H1 (cell line): ENCODE measurements at regions of chr11 and their contacts with region 1.

Region 1: DNA sequence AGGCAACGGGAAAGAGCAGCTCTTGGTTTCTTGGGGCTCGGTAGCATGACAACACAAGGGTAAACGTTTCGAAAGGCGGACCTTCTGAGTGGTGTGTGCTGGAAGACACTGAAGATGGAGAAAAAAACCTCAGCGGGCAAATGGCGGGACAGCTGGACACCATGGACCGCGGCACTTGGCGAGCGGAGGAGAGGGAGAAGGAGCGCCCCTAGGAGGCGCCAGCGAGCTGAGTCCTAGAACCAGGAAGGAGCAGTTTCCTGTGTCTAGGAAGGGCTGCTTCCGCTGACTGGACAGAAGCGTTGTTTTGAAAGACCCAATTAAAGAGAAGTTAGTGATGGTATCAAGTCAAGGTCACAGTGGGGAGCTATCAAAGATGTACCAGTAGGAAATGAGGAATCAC is 44.0 kb upstream of the OPCML start:
- DNase-seq: peak in 1 of 2 experiments; percentile 91
- H3K4me3 ChIP-seq: no peak overlapping the region
- H3K27ac ChIP-seq: no peak overlapping the region
- H3K4me1 ChIP-seq: peaks cover 0 to 10% (median 6%) of the 10 kb centered on the region in 4 experiments; a peak in 4 of 7 replicates
- H3K27me3 ChIP-seq: no peaks in the 10 kb centered on the region; a peak in 2 of 7 replicates
- CTCF ChIP-seq: peak; percentile 78 to 87 (median 85)
- EP300 ChIP-seq: no peak
- POLR2A ChIP-seq: no peak
- RAD21 ChIP-seq: peak; percentile 77 to 83

Region 2: GRCh38 chr11:133491680-133492383 is 84.5 kb before region 1 on chr11:
- CTCF ChIA-PET with region 1: no interaction called
- POLR2A ChIA-PET with region 1: no interaction called
- DNase-seq: no peak
- H3K4me3 ChIP-seq: no peak overlapping the region
- H3K27ac ChIP-seq: no peak overlapping the region
- H3K4me1 ChIP-seq: no peaks in the 10 kb centered on the region
- H3K27me3 ChIP-seq: no peaks in the 10 kb centered on the region
- CTCF ChIP-seq: no peak
- EP300 ChIP-seq: no peak
- POLR2A ChIP-seq: no peak
- RAD21 ChIP-seq: no peak

Region 3: GRCh38 chr11:133531971-133532651 is 44.2 kb before region 1 on chr11 and contains the start of gene OPCML:
- CTCF ChIA-PET with region 1: interaction called, 13 read pairs
- POLR2A ChIA-PET with region 1: interaction called, 4 read pairs
- DNase-seq: peak in 1 of 2 experiments; percentile 60
- H3K4me3 ChIP-seq: peak within 1 kb of the TSS; percentile 64 to 72 (median 70)
- H3K27ac ChIP-seq: peak within 1 kb of the TSS; percentile 37; the same call in 1 of the 2 replicates
- H3K4me1 ChIP-seq: peaks cover 12 to 38% (median 21%) of the 10 kb centered on the region in 4 experiments
- H3K27me3 ChIP-seq: peaks cover 0 to 19% (median 14%) of the 10 kb centered on the region in 4 experiments; a peak in 4 of 7 replicates
- CTCF ChIP-seq: no peak
- EP300 ChIP-seq: no peak
- POLR2A ChIP-seq: no peak
- RAD21 ChIP-seq: peak; percentile 7 to 8; a peak in 1 of 4 replicates
- total RNA-seq, gene OPCML: 2.1 and 2.3 TPM in 2 replicates

Region 4: GRCh38 chr11:133563505-133564025 is 12.8 kb before region 1 on chr11:
- CTCF ChIA-PET with region 1: interaction called, 20 read pairs
- POLR2A ChIA-PET with region 1: no interaction called
- DNase-seq: no peak
- H3K4me3 ChIP-seq: no peak overlapping the region
- H3K27ac ChIP-seq: no peak overlapping the region
- H3K4me1 ChIP-seq: no peaks in the 10 kb centered on the region
- H3K27me3 ChIP-seq: no peaks in the 10 kb centered on the region; a peak in 1 of 7 replicates
- CTCF ChIP-seq: no peak
- EP300 ChIP-seq: no peak
- POLR2A ChIP-seq: no peak
- RAD21 ChIP-seq: no peak

Region 5: DNA sequence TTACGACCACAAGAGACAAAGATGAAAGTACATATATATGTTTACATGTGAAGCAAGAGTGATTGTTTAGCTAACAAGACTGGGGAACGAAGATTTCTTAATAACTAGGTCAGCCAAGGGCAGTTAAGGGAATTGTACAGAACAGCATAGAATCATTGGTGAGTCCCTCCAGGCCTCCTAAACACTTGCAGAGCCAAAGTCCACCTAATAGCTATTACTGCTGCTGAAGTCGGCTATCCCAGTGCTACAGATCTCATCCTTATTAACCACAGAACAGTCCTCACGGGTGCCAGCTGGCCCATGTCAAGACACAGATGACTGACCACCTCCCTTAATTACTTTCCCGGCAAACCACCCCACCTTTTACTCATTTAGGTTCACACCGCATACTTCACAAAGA is 24.4 kb after region 1 on chr11:
- CTCF ChIA-PET with region 1: interaction called, 16 read pairs
- POLR2A ChIA-PET with region 1: interaction called, 3 read pairs
- DNase-seq: no peak
- H3K4me3 ChIP-seq: no peak overlapping the region
- H3K27ac ChIP-seq: no peak overlapping the region
- H3K4me1 ChIP-seq: peaks cover 1 to 10% (median 5%) of the 10 kb centered on the region in 4 experiments; a peak in 5 of 7 replicates
- H3K27me3 ChIP-seq: no peaks in the 10 kb centered on the region
- CTCF ChIP-seq: no peak
- EP300 ChIP-seq: no peak
- POLR2A ChIP-seq: no peak
- RAD21 ChIP-seq: no peak

Region 6: GRCh38 chr11:133834682-133835592 is 258.6 kb after region 1 on chr11:
- CTCF ChIA-PET with region 1: interaction called, 13 read pairs
- POLR2A ChIA-PET with region 1: no interaction called
- DNase-seq: peak; percentile 68 to 78
- H3K4me3 ChIP-seq: no peak overlapping the region
- H3K27ac ChIP-seq: no peak overlapping the region
- H3K4me1 ChIP-seq: peaks cover 0 to 2% (median 0%) of the 10 kb centered on the region in 4 experiments; a peak in 3 of 7 replicates
- H3K27me3 ChIP-seq: no peaks in the 10 kb centered on the region
- CTCF ChIP-seq: peak; percentile 58 to 93 (median 89)
- EP300 ChIP-seq: no peak
- POLR2A ChIP-seq: no peak
- RAD21 ChIP-seq: peak; percentile 97